Common myeloid progenitor, CD34-positive (primary cell): ENCODE measurements at regions of chr6 and their contacts with region 1.

Region 1: DNA sequence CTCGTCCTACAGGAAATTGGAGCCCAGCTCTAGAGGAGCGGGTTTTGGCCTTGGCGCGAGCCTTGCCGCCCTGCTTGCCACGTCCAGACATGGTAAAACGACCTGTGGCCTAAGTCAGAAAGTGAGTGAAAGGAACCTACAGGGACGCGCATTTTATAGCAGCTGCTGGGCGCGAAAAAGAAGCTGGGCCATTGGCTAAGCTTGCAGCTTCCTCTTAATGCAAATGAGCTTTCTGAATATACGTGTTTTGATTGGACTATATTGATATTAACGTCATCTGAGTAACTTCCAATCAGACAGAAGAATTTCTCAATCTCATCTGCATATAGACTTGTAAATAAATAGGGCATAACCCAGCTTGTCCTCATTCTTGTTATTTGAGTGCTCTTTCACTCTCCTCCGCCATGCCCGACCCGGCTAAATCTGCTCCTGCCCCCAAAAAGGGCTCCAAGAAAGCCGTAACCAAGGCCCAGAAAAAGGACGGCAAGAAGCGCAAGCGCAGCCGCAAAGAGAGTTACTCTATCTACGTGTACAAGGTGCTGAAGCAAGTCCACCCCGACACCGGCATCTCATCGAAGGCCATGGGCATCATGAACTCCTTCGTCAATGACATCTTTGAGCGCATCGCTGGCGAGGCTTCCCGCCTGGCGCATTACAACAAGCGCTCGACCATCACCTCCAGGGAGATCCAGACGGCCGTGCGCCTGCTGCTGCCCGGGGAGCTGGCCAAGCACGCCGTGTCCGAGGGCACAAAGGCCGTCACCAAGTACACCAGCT is 18.9 kb downstream of the OR2B2 start:
- DNase-seq: peak; percentile 97 to 99 (median 98)
- H3K4me3 ChIP-seq: peak overlapping the region; percentile 78 to 100 (median 96)
- H3K27ac ChIP-seq: peak overlapping the region; percentile 46 to 85
- H3K4me1 ChIP-seq: peaks cover 7 to 53% (median 29%) of the 10 kb centered on the region in 4 experiments
- H3K27me3 ChIP-seq: no peaks in the 10 kb centered on the region

Region 2: GRCh38 chr6:27146706-27147505 is 746.3 kb before region 1 on chr6:
- CTCF ChIA-PET with region 1: interaction called, 6 read pairs
- POLR2A ChIA-PET with region 1: interaction called, 14 read pairs
- DNase-seq: peak; percentile 99 to 100 (median 99)
- H3K4me3 ChIP-seq: peak overlapping the region; percentile 61 to 97 (median 92)
- H3K27ac ChIP-seq: peak overlapping the region; percentile 46 to 92
- H3K4me1 ChIP-seq: peaks cover 11 to 37% (median 27%) of the 10 kb centered on the region in 4 experiments
- H3K27me3 ChIP-seq: no peaks in the 10 kb centered on the region

Region 3: DNA sequence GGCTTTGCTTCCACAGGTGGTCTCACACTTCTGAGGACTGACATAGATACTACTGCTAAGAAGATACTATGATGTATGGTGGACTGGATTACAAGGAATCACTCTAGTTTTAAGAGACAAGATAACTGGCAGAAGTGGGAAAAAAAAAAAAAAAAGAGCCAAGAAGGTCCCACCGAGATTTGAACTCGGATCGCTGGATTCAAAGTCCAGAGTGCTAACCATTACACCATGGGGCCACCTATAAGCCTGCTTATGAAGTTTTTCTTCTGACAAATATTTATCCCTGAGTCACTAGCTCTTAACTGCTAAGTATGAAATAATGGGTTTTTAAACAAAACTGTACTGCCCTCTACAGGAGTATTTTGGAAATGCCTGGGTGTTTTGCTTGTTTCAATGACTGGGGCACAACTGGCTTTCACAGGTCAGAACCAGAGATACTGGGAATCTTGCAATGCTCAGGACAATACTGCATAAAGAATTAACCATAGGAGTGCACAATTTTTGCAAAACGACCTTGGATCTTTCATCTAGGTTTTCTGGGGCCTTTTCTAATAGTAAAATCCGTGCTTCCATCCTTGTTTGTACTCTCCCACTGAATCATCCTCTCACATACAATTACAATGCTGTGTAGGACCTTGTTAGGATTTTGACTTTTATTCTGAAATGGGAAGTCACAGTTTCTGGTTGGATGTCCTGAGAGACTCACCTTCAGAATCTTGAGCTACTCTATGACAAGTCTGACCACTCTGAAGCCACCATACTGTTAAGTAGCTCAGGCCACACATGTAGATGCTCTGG is 97.4 kb before region 1 on chr6:
- CTCF ChIA-PET with region 1: interaction called, 31 read pairs
- POLR2A ChIA-PET with region 1: interaction called, 4 read pairs
- DNase-seq: peak; percentile 90 to 95 (median 92)
- H3K4me3 ChIP-seq: no peak overlapping the region
- H3K27ac ChIP-seq: no peak overlapping the region
- H3K4me1 ChIP-seq: peaks cover 13 to 22% (median 20%) of the 10 kb centered on the region in 4 experiments
- H3K27me3 ChIP-seq: peaks cover 0 to 2% (median 0%) of the 10 kb centered on the region in 5 experiments

Region 4: DNA sequence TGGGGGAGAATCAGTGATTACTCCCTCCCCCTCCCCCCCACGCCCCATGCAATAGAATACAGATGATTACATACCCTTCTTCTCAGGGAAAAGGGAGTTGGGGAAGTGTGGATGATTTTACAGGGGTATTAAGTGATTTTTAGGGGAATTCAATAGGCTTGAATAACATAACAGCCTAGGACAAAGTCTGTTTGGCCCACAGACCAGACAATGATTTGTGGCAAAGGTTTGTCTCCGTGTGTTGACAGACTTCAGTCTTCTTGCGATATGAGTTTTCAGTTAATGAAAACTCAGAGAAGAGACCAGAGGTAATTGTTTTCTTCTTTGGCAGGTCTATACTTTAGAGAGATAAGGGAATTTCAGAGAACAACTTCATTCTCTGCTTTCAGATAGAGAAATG is 76.3 kb before region 1 on chr6:
- CTCF ChIA-PET with region 1: interaction called, 121 read pairs
- POLR2A ChIA-PET with region 1: interaction called, 58 read pairs
- DNase-seq: no peak
- H3K4me3 ChIP-seq: no peak overlapping the region
- H3K27ac ChIP-seq: peak overlapping the region in 1 of 2 experiments; percentile 22
- H3K4me1 ChIP-seq: peaks cover 6 to 47% (median 23%) of the 10 kb centered on the region in 4 experiments
- H3K27me3 ChIP-seq: no peaks in the 10 kb centered on the region

Region 5: DNA sequence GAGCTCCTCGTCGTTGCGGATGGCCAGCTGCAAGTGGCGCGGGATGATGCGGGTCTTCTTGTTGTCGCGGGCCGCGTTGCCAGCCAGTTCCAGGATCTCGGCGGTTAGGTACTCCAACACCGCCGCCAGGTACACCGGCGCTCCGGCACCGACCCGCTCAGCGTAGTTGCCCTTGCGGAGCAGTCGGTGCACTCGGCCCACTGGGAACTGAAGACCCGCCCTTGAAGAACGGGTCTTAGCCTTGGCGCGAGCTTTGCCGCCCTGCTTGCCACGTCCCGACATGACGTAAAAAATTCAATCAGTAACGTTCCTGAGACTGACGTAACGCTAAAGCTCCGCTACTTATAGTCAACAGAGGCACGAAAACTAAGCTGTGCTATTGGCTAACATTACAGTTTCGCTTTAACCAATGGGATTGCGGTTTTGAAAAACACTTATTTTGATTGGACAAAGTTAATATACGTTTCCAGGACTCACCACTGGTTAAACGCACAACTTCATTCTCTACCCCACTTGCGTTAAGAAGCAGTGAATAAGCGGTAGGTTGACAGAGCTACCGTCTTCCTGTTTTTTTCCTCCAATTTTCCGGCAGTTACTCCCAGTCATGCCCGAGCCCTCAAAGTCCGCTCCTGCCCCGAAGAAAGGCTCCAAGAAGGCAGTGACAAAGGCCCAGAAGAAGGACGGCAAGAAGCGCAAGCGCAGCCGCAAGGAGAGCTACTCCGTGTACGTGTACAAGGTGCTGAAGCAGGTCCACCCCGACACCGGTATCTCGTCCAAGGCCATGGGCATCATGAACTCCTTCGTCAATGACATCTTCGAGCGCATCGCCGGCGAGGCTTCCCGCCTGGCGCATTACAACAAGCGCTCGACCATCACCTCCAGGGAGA is 54.9 kb before region 1 on chr6:
- CTCF ChIA-PET with region 1: interaction called, 22 read pairs
- POLR2A ChIA-PET with region 1: interaction called, 49 read pairs
- DNase-seq: peak; percentile 99 to 100 (median 99)
- H3K4me3 ChIP-seq: peak overlapping the region; percentile 64 to 97 (median 90)
- H3K27ac ChIP-seq: peak overlapping the region; percentile 94 to 98
- H3K4me1 ChIP-seq: peaks cover 22 to 46% (median 35%) of the 10 kb centered on the region in 4 experiments
- H3K27me3 ChIP-seq: no peaks in the 10 kb centered on the region